Testis (tissue), 5 donors: ENCODE measurements at regions of chr1 and their contacts with region 1.

Region 1: DNA sequence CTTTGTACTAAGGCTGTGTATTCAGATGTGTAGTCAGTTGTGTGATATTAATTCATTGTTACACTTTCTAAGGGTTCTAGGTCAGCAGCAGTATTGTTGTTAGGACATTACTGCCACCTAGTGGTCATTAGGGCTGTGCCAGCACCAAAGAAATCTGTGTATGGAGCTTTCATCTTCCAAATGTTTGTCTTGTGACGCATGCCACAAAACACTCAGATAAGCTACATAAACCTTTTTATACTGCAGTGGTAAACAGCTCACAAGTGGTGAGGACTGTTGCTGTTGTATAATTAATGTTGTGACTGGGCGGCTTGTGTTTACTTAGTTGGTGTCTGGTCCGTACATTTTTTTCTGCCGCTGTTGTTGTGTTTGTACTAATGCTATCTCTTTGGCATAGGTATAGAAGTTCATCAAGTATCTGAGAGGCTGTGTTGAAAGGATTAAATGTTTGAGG is 51.7 kb downstream of the S1PR1 start:
- DNase-seq: peak; percentile 85
- H3K4me3 ChIP-seq: no peak overlapping the region
- H3K27ac ChIP-seq: no peak overlapping the region
- H3K4me1 ChIP-seq: no peaks in the 10 kb centered on the region
- H3K27me3 ChIP-seq: no peaks in the 10 kb centered on the region
- CTCF ChIP-seq: peak; percentile 76 to 92 (median 84)
- POLR2A ChIP-seq: no peak

Region 2: GRCh38 chr1:99533909-99534637 is 1754.4 kb before region 1 on chr1:
- intact Hi-C with region 1: no loop called
- DNase-seq: no peak
- H3K4me3 ChIP-seq: no peak overlapping the region
- H3K27ac ChIP-seq: peak overlapping the region in 1 of 2 donors; percentile 22
- H3K4me1 ChIP-seq: no peaks in the 10 kb centered on the region
- H3K27me3 ChIP-seq: no peaks in the 10 kb centered on the region
- CTCF ChIP-seq: no peak
- POLR2A ChIP-seq: no peak

Region 3: GRCh38 chr1:100584761-100585745 is 703.5 kb before region 1 on chr1:
- intact Hi-C with region 1: no loop called
- DNase-seq: peak; percentile 35
- H3K4me3 ChIP-seq: no peak overlapping the region
- H3K27ac ChIP-seq: peak overlapping the region in 1 of 2 donors; percentile 65
- H3K4me1 ChIP-seq: peaks cover 5% of the 10 kb centered on the region
- H3K27me3 ChIP-seq: no peaks in the 10 kb centered on the region
- CTCF ChIP-seq: no peak
- POLR2A ChIP-seq: no peak

Region 4: GRCh38 chr1:100921109-100921706 is 367.3 kb before region 1 on chr1:
- intact Hi-C with region 1: loop called (anchors 5 kb)
- DNase-seq: no peak
- H3K4me3 ChIP-seq: no peak overlapping the region
- H3K27ac ChIP-seq: no peak overlapping the region
- H3K4me1 ChIP-seq: no peaks in the 10 kb centered on the region
- H3K27me3 ChIP-seq: no peaks in the 10 kb centered on the region
- CTCF ChIP-seq: peak; percentile 41 to 77 (median 51)
- POLR2A ChIP-seq: no peak